ENCODE measurements at regions of chr7 and their contacts with region 1.

Region 1: DNA sequence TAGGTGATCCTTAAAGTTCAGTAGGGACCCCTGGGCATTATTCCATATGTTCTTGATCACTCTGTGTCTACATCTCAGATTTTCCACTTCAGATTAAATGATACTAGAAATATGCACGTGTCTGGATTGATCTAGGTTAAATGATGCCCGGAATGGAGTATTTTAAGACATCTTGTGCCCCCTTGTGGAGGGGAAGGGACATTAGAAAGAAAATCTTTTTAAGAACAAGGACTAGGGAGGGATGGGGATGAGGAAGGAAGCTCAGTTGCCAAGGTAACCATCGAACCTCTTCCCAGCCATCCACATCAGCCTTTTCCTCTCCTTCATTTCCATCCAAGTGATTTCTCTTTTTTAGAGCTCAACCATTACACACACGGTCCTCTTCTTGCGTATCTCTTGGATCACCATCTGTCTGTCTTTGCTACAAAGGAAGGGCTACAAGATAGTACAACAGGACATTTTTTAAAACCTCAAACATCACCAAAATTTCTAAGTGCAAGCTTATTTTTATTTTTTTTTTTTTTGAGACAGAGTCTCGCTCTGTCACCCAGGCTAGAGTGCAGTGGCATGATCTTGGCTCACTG is 40.5 kb downstream of the PRSS2 start:
- DNase-seq: no peak
- H3K4me3 Mint-ChIP-seq: no peak overlapping the region
- H3K27ac Mint-ChIP-seq: peak overlapping the region; percentile 79
- H3K4me1 Mint-ChIP-seq: peaks cover 71% of the 10 kb centered on the region
- H3K27me3 Mint-ChIP-seq: peaks cover 3% of the 10 kb centered on the region

Region 2: GRCh38 chr7:142301923-142302550 is 509.2 kb before region 1 on chr7:
- CTCF ChIA-PET with region 1: interaction called, 48 read pairs
- POLR2A ChIA-PET with region 1: interaction called, 7 read pairs
- DNase-seq: no peak
- H3K4me3 Mint-ChIP-seq: no peak overlapping the region
- H3K27ac Mint-ChIP-seq: no peak overlapping the region
- H3K4me1 Mint-ChIP-seq: peaks cover 6% of the 10 kb centered on the region
- H3K27me3 Mint-ChIP-seq: peaks cover 16% of the 10 kb centered on the region

Region 3: GRCh38 chr7:142535123-142535779 is 276.0 kb before region 1 on chr7:
- CTCF ChIA-PET with region 1: interaction called, 11 read pairs
- POLR2A ChIA-PET with region 1: interaction called, 25 read pairs
- DNase-seq: peak; percentile 83
- H3K4me3 Mint-ChIP-seq: peak overlapping the region; percentile 17
- H3K27ac Mint-ChIP-seq: peak overlapping the region; percentile 63
- H3K4me1 Mint-ChIP-seq: peaks cover 31% of the 10 kb centered on the region
- H3K27me3 Mint-ChIP-seq: peaks cover 5% of the 10 kb centered on the region

Region 4: DNA sequence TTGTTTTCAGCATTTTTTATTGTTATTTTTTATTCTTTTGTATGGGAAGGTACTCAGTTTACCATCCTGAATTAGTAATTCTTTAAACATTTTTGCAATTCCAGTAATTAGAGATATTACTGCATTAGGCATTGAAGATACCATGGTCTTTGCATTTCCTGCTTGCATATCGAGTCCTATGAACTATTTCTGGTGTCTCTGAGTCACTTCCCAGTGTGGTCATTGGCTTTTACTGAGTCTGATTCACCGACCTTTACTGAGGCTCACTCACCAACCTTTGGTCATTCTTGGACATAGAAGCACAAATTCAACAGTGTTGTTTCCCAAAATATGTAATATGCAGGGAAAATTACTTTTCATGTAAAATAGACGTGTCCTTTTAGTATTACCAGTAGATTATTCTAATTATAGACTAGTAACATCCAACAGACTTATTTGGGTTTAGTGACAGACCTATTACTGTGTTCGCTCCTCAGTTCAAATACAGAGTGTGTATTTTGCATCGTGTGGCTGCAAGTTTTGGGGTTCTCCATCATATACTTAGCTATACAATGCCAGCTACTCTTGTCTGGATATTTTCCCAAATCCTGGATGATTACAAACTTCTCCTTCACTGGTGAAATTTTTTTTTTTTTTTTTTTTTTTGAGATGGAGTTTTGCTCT is 242.7 kb before region 1 on chr7:
- CTCF ChIA-PET with region 1: no interaction called
- POLR2A ChIA-PET with region 1: no interaction called
- DNase-seq: no peak
- H3K4me3 Mint-ChIP-seq: no peak overlapping the region
- H3K27ac Mint-ChIP-seq: no peak overlapping the region
- H3K4me1 Mint-ChIP-seq: peaks cover 12% of the 10 kb centered on the region
- H3K27me3 Mint-ChIP-seq: peaks cover 14% of the 10 kb centered on the region

Region 5: DNA sequence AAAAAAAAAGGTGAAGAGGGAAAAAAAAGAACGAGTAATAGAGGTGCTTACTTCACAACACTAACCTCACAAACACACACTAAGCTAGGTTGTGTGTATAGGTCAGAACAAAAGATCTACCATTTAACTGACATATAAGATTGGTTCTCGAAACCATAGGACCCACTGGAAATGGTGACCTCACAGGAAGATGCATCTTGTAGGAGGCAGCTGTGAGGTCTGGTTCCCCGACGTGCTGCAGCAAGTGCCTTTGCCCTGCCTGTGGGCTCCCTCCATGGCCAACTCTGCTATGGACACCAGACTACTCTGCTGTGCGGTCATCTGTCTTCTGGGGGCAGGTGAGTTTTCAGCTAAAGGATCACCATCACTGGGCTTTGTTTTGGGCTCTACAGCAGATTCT is 195.7 kb before region 1 on chr7:
- CTCF ChIA-PET with region 1: no interaction called
- POLR2A ChIA-PET with region 1: interaction called, 10 read pairs
- DNase-seq: no peak
- H3K4me3 Mint-ChIP-seq: peak overlapping the region; percentile 61
- H3K27ac Mint-ChIP-seq: peak overlapping the region; percentile 73
- H3K4me1 Mint-ChIP-seq: peaks cover 23% of the 10 kb centered on the region
- H3K27me3 Mint-ChIP-seq: peaks cover 10% of the 10 kb centered on the region

Region 6: GRCh38 chr7:142711746-142712619 is 99.3 kb before region 1 on chr7:
- CTCF ChIA-PET with region 1: interaction called, 22 read pairs
- POLR2A ChIA-PET with region 1: interaction called, 74 read pairs
- DNase-seq: peak; percentile 53
- H3K4me3 Mint-ChIP-seq: peak overlapping the region; percentile 68
- H3K27ac Mint-ChIP-seq: peak overlapping the region; percentile 89
- H3K4me1 Mint-ChIP-seq: peaks cover 83% of the 10 kb centered on the region
- H3K27me3 Mint-ChIP-seq: no peaks in the 10 kb centered on the region

Region 7: DNA sequence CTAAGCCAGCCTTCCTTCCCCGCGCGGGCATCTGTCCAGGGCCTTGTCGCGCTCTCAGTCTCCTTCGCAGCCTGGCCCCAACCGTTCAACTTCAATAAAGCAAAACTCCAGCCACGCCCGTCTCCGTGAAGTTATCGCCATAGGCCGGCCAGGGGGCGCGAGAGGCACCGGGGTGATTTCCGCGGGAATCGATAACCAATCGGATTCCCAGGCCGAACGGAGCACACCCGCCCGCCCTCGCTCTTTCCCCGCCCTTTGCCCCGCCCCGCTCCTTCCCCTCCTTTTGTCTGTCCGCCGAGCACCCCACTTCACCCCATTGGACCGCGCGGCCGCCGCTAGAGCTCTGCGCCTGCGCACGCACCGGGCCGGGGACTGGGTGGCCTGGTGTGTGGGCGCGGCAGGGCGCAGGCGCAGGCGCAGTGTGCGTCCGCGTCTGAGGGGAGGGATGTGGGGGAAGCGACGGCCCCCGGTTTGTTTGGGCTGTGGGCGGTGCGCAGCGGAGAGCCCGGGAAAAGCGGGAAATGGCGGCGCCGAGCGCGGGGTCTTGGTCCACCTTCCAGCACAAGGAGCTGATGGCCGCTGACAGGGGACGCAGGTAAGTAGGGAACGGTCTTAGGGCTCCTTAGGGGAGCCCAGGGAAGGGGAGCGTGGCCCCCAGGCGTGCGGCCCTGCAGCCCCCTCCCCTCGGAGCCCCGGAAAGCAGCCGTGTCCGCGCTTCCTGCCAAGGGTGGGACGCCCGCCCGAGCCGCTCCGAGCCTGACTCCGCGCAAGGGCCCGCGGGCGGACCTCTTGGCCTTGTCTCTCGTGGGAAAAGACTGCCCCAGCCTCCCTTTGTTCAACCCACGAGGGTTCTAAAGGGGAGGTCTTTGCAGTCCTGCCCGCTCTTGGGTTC is 476.9 kb after region 1 on chr7 and contains the start of gene CASP2:
- CTCF ChIA-PET with region 1: no interaction called
- POLR2A ChIA-PET with region 1: interaction called, 10 read pairs
- DNase-seq: peak; percentile 99
- H3K4me3 Mint-ChIP-seq: peak within 1 kb of the TSS; percentile 89
- H3K27ac Mint-ChIP-seq: peak within 1 kb of the TSS; percentile 82
- H3K4me1 Mint-ChIP-seq: peaks cover 55% of the 10 kb centered on the region
- H3K27me3 Mint-ChIP-seq: no peaks in the 10 kb centered on the region
- total RNA-seq, gene CASP2: 117 to 122 TPM